Activated CD8-positive, alpha-beta T cell treated with anti-CD3 and anti-CD28 coated beads for 36 hours (primary cell): ENCODE measurements at regions of chr5 and their contacts with region 1.

Region 1: GRCh38 chr5:132238169-132238744 is 10.6 kb upstream of the P4HA2 start:
- DNase-seq: peak; percentile 94
- ATAC-seq: peak; percentile 98
- H3K4me3 Mint-ChIP-seq: no peak overlapping the region
- H3K27ac Mint-ChIP-seq: no peak overlapping the region
- H3K4me1 Mint-ChIP-seq: no peaks in the 10 kb centered on the region
- H3K27me3 Mint-ChIP-seq: no peaks in the 10 kb centered on the region
- CTCF ChIP-seq: peak; percentile 79

Region 2: DNA sequence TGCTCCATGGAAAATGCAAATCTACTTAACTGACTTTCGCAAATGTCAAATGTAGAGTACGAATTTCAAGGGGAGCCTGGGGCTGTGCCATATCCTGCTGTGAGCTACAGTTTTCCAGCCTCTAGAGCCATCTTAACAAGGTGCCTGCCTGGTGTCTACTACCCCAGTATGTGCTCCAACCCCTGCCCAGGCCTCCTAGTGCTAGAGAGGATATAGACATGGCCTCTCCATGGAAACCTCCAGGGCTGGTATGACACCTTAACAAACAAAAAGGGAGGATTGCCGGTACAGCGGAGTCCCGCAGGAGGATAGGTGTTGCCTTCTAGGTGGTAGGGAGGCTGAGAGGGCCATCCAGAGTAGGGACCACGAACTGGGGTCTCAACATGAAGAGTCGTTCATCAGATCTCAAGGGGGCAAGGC is 191.4 kb before region 1 on chr5:
- CTCF ChIA-PET with region 1: no interaction called
- POLR2A ChIA-PET with region 1: no interaction called
- intact Hi-C with region 1: no loop called
- DNase-seq: no peak
- ATAC-seq: no peak
- H3K4me3 Mint-ChIP-seq: no peak overlapping the region
- H3K27ac Mint-ChIP-seq: no peak overlapping the region
- H3K4me1 Mint-ChIP-seq: no peaks in the 10 kb centered on the region
- H3K27me3 Mint-ChIP-seq: peaks cover 4% of the 10 kb centered on the region
- CTCF ChIP-seq: no peak

Region 3: GRCh38 chr5:132190161-132190817 is 48.0 kb before region 1 on chr5:
- CTCF ChIA-PET with region 1: interaction called, 13 read pairs
- POLR2A ChIA-PET with region 1: no interaction called
- intact Hi-C with region 1: no loop called
- DNase-seq: no peak
- ATAC-seq: peak; percentile 99
- H3K4me3 Mint-ChIP-seq: no peak overlapping the region
- H3K27ac Mint-ChIP-seq: no peak overlapping the region
- H3K4me1 Mint-ChIP-seq: peaks cover 3% of the 10 kb centered on the region
- H3K27me3 Mint-ChIP-seq: peaks cover 6% of the 10 kb centered on the region
- CTCF ChIP-seq: peak; percentile 69

Region 4: GRCh38 chr5:132251220-132251725 is 13.0 kb after region 1 on chr5:
- CTCF ChIA-PET with region 1: interaction called, 30 read pairs
- POLR2A ChIA-PET with region 1: interaction called, 3 read pairs
- intact Hi-C with region 1: no loop called
- DNase-seq: no peak
- ATAC-seq: no peak
- H3K4me3 Mint-ChIP-seq: no peak overlapping the region
- H3K27ac Mint-ChIP-seq: no peak overlapping the region
- H3K4me1 Mint-ChIP-seq: no peaks in the 10 kb centered on the region
- H3K27me3 Mint-ChIP-seq: peaks cover 5% of the 10 kb centered on the region
- CTCF ChIP-seq: no peak

Region 5: DNA sequence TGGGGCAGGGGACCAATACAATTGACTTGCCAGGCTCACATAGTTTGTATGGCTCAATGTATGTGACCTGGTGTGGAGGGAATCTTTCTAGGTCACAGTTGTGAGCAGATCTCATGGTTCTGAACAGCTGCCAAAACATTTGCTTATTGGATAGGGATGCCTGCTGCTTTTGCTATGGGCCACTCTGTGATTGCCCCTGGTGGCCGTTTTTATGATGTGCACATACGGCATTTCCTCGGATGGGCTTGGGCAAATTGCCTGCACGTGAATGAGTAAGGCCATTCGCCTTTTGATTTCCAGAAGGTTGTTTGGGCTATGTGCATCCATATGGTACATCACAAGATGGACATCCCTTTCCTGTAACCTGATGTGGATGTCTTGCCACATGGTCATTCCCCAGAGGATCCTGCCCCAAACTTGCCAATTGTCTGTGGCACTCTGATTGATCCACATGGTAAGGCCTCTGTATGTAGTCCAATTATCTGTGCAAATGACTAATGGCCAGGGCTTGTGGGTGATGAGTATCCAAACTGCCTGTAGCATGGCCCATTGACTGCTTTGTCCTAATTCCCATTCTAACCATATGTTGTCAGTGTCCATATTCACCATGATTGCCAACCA is 45.3 kb after region 1 on chr5:
- CTCF ChIA-PET with region 1: interaction called, 12 read pairs
- POLR2A ChIA-PET with region 1: interaction called, 4 read pairs
- intact Hi-C with region 1: no loop called
- DNase-seq: no peak
- ATAC-seq: no peak
- H3K4me3 Mint-ChIP-seq: no peak overlapping the region
- H3K27ac Mint-ChIP-seq: no peak overlapping the region
- H3K4me1 Mint-ChIP-seq: no peaks in the 10 kb centered on the region
- H3K27me3 Mint-ChIP-seq: no peaks in the 10 kb centered on the region
- CTCF ChIP-seq: peak; percentile 39

Region 6: GRCh38 chr5:132369474-132370180 is 131.4 kb after region 1 on chr5 and contains the start of gene SLC22A5:
- CTCF ChIA-PET with region 1: interaction called, 12 read pairs
- POLR2A ChIA-PET with region 1: no interaction called
- intact Hi-C with region 1: no loop called
- DNase-seq: peak; percentile 73
- ATAC-seq: peak; percentile 96
- H3K4me3 Mint-ChIP-seq: peak within 1 kb of the TSS; percentile 82
- H3K27ac Mint-ChIP-seq: peak within 1 kb of the TSS; percentile 84
- H3K4me1 Mint-ChIP-seq: peaks cover 28% of the 10 kb centered on the region
- H3K27me3 Mint-ChIP-seq: no peaks in the 10 kb centered on the region
- CTCF ChIP-seq: no peak
- total RNA-seq, gene SLC22A5: 4.0 to 4.1 TPM